ENCODE measurements at regions of chr2 and their contacts with region 1.

Region 1: DNA sequence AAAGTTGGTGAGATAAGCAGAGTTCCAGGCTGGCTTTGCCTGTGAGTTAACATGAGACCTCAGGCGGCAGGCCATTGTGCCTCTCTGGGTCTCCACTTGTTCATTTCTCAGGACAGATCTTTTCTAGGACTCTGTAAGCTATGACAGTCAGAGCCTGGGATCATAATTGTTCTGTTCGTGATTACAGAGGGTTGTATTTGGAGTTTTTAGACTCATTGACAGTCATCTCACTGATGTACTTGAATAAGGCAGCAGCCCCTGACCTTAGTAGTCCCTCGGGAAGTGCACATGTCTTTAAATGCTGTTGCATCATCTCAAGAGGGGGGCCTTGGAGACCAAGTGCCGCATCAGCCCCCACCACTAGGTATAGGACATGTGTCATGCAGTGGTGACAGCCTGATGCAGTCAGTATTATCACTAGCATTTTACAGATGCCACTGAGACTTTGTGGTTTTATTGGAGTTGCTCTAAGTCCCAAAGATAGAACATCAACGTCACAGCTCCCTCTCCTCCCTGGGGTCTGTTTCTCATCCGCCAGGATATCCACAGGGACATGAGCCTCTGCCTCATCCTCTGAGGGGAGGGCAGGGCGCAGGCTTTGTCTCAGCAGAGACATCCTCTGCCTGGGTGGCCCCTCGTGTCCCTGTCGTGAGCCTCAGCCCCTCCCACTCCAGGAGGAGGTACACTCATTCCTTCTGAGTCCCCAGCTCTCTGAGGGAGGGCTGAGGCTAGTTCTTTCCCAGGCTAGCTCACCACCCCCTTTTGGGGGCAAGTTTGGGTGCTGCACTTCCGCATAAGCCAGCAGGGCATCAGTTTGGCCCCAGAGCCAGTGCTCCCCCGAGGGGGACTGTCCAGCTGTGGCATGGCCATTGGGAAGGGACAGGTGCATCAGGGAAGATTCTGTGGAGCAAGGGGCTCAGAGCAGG is 14.1 kb downstream of the GLI2 start:
- DNase-seq: no peak
- ATAC-seq: no peak
- H3K4me3 ChIP-seq: no peak overlapping the region
- H3K27ac ChIP-seq: no peak overlapping the region
- H3K4me1 ChIP-seq: no peaks in the 10 kb centered on the region
- H3K27me3 ChIP-seq: peaks cover 0 to 30% of the 10 kb centered on the region in 2 experiments; a peak in 4 of 5 replicates
- CTCF ChIP-seq: no peak
- EP300 ChIP-seq: no peak
- POLR2A ChIP-seq: no peak
- RAD21 ChIP-seq: no peak

Region 2: DNA sequence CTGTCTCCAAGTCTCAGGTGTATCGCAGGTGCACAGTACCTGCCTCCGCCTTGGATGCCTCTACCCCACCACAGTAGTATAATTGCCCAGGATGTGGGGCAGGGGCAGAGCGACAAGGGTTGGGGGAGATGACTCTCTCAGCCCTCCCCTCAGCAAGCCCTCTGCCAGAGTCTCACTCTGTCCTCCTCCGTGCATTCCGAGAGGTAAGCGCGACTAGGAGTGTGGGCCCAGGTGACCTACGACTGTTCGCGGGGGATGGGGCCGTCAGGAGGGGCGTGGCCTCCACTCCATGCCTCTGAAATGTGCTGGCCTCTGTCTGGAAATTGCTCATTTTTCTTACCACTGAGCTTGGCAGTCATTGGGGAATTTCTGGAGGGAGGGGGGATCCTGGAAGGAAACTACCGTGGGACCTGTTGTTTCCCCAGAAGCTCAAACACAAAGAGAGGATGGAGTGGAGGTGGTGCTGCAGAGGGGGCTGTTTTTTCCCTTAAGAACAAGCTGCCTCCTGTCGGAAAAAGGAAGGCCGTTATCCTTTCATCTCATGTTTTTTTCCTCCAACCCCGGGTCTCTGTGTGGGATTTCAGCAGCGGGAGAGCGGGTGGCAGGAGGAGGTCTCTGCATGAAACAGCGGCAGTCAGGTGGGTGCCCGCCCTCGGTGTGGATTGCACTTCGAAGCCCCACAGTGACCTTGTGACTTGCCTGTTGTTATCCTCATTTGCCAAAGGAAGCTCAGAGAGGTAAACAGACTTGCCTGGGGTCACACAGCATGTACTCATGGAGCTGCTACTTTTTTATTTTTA is 510.1 kb before region 1 on chr2:
- CTCF ChIA-PET with region 1: no interaction called
- POLR2A ChIA-PET with region 1: no interaction called
- in situ Hi-C with region 1: no loop called
- intact Hi-C with region 1: loop called (anchors 5 kb)
- DNase-seq: peak; percentile 37
- ATAC-seq: peak; percentile 48
- H3K4me3 ChIP-seq: peak overlapping the region; percentile 29 to 68 (median 48)
- H3K27ac ChIP-seq: peak overlapping the region; percentile 4
- H3K4me1 ChIP-seq: peaks cover 48% of the 10 kb centered on the region
- H3K27me3 ChIP-seq: peaks cover 4 to 10% of the 10 kb centered on the region in 2 experiments; a peak in 4 of 5 replicates
- CTCF ChIP-seq: no peak
- EP300 ChIP-seq: no peak
- POLR2A ChIP-seq: no peak
- RAD21 ChIP-seq: no peak

Measured in HepG2 (cell line).